Calu3 (cell line): ENCODE measurements at regions of chr7 and their contacts with region 1.

Region 1: GRCh38 chr7:12211054-12211710 is at the start of gene TMEM106B:
- DNase-seq: peak; percentile 99
- H3K4me3 Mint-ChIP-seq: peak within 1 kb of the TSS; percentile 85
- H3K27ac Mint-ChIP-seq: peak within 1 kb of the TSS; percentile 93
- H3K4me1 Mint-ChIP-seq: peaks cover 27% of the 10 kb centered on the region
- H3K27me3 Mint-ChIP-seq: no peaks in the 10 kb centered on the region
- CTCF ChIP-seq: no peak
- total RNA-seq, gene TMEM106B: 76.7 and 81.5 TPM in 2 replicates

Region 2: GRCh38 chr7:12111422-12112405 is 99.5 kb before region 1 on chr7:
- CTCF ChIA-PET with region 1: no interaction called
- intact Hi-C with region 1: loop called (anchors 2 kb)
- DNase-seq: peak; percentile 69
- H3K4me3 Mint-ChIP-seq: peak overlapping the region; percentile 86
- H3K27ac Mint-ChIP-seq: peak overlapping the region; percentile 27
- H3K4me1 Mint-ChIP-seq: peaks cover 47% of the 10 kb centered on the region
- H3K27me3 Mint-ChIP-seq: no peaks in the 10 kb centered on the region
- CTCF ChIP-seq: no peak

Region 3: DNA sequence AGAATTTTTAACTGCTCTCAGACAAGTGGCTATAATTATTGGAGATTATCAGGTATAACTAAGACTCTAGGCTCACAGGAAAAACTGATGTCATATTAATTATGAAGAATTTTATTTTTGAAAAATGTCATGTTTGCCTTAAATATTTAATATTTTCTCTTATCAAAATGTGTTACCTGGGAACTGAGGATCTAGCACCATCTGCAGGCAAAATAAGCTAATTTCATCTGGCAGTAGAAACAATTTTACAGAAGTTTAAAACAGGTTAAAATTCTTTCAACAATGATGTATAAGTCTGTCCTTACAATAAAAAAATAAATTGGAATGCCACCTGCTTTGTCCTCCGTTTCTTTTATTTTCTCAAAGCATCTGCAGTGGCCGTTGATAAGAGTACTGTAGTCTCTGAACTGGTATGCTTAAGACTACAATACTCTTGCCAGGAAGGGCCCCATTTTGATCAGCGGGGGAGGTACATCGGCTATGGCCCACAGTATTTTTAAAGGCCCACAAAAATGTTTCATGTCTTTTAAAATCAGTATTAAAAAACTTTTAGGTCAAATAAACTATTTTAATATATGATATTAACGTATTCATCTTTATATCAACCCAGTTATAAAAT is 111.2 kb after region 1 on chr7:
- CTCF ChIA-PET with region 1: interaction called, 6 read pairs
- intact Hi-C with region 1: loop called (anchors 2 kb)
- DNase-seq: peak; percentile 21
- H3K4me3 Mint-ChIP-seq: no peak overlapping the region
- H3K27ac Mint-ChIP-seq: no peak overlapping the region
- H3K4me1 Mint-ChIP-seq: peaks cover 11% of the 10 kb centered on the region
- H3K27me3 Mint-ChIP-seq: no peaks in the 10 kb centered on the region
- CTCF ChIP-seq: peak; percentile 74

Region 4: GRCh38 chr7:12357508-12357907 is 146.3 kb after region 1 on chr7:
- CTCF ChIA-PET with region 1: no interaction called
- intact Hi-C with region 1: no loop called
- DNase-seq: no peak
- H3K4me3 Mint-ChIP-seq: no peak overlapping the region
- H3K27ac Mint-ChIP-seq: no peak overlapping the region
- H3K4me1 Mint-ChIP-seq: no peaks in the 10 kb centered on the region
- H3K27me3 Mint-ChIP-seq: no peaks in the 10 kb centered on the region
- CTCF ChIP-seq: no peak